Sigmoid colon (tissue), 7 donors: ENCODE measurements at regions of chr12 and their contacts with region 1.

Region 1: GRCh38 chr12:8687846-8688601 is 9.8 kb upstream of the RIMKLB start:
- DNase-seq: peak; percentile 94
- H3K4me3 ChIP-seq: peak overlapping the region in 1 of 4 donors; percentile 5
- H3K27ac ChIP-seq: peak overlapping the region; percentile 69 to 86 (median 84)
- H3K4me1 ChIP-seq: peaks cover 0 to 52% (median 37%) of the 10 kb centered on the region in 4 donors
- H3K27me3 ChIP-seq: no peaks in the 10 kb centered on the region
- CTCF ChIP-seq: no peak
- EP300 ChIP-seq: peak in 2 of 4 donors; percentile 64 to 79
- POLR2A ChIP-seq: no peak

Region 2: DNA sequence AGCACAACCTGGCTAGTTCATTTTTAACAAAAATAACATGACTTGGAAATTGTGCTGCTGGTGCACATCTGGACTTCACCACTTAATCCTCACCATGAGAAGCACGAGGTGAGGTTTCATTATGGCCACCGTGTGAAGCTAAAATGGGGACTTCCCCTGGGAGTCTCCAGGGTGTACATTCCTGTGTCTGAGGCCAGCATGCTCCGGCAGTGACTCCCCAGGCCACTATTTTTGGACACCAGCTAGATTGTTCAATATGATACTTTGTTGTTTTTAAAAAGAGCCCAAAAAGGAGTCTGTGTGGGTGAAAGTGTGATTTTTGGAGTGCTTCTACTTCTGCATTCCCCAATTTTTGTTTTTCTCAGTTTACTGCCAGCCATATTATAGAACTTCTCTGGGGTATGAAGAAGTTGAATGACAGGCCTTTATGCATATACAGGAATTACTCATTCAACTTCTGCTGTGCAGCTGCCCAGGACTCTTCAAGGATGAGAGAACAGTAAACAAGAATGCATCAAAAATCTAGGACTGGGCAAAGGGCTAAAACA is 58.5 kb before region 1 on chr12:
- intact Hi-C with region 1: no loop called
- DNase-seq: no peak
- H3K4me3 ChIP-seq: no peak overlapping the region
- H3K27ac ChIP-seq: no peak overlapping the region
- H3K4me1 ChIP-seq: peaks cover 0 to 5% (median 0%) of the 10 kb centered on the region in 4 donors
- H3K27me3 ChIP-seq: no peaks in the 10 kb centered on the region
- CTCF ChIP-seq: no peak
- EP300 ChIP-seq: no peak
- POLR2A ChIP-seq: no peak

Region 3: GRCh38 chr12:8742501-8742900 is 54.5 kb after region 1 on chr12:
- intact Hi-C with region 1: loop called (anchors 5 kb)
- DNase-seq: no peak
- H3K4me3 ChIP-seq: no peak overlapping the region
- H3K27ac ChIP-seq: no peak overlapping the region
- H3K4me1 ChIP-seq: peaks cover 0 to 16% (median 8%) of the 10 kb centered on the region in 4 donors
- H3K27me3 ChIP-seq: no peaks in the 10 kb centered on the region
- CTCF ChIP-seq: no peak
- EP300 ChIP-seq: no peak
- POLR2A ChIP-seq: no peak

Region 4: DNA sequence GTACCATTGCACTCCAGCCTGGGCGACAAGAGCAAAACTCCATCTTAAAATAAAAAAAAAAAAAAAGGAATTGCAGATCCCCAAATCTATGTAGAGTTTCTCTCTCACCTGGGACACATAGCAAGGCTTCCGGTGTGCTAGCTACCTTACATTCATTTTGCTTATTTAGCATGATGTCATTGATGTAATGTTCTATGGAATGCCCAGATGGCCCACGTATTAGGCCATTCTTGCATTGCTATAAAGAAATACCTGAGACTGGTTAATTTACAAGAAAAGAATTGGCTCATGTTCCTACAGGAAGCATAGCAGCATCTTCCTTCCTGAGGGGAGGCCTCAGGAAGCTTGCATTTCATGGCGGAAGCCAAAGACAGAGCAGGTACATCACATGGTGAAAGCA is 97.5 kb after region 1 on chr12:
- intact Hi-C with region 1: no loop called
- DNase-seq: no peak
- H3K4me3 ChIP-seq: no peak overlapping the region
- H3K27ac ChIP-seq: no peak overlapping the region
- H3K4me1 ChIP-seq: peaks cover 0 to 8% (median 3%) of the 10 kb centered on the region in 4 donors
- H3K27me3 ChIP-seq: no peaks in the 10 kb centered on the region
- CTCF ChIP-seq: no peak
- EP300 ChIP-seq: no peak
- POLR2A ChIP-seq: no peak

Region 5: GRCh38 chr12:9064201-9064814 is 376.3 kb after region 1 on chr12:
- intact Hi-C with region 1: loop called (anchors 10 kb)
- DNase-seq: peak; percentile 79
- H3K4me3 ChIP-seq: peak overlapping the region; percentile 73 to 95 (median 88)
- H3K27ac ChIP-seq: peak overlapping the region; percentile 96 to 100 (median 99)
- H3K4me1 ChIP-seq: peaks cover 0 to 16% (median 13%) of the 10 kb centered on the region in 4 donors
- H3K27me3 ChIP-seq: no peaks in the 10 kb centered on the region
- CTCF ChIP-seq: peak in 2 of 4 experiments; percentile 21 to 37
- EP300 ChIP-seq: no peak
- POLR2A ChIP-seq: peak; percentile 15 to 16